A673 (cell line): ENCODE measurements at regions of chr4 and their contacts with region 1.

Region 1: GRCh38 chr4:116180157-116180601 is 905.2 kb downstream of the TRAM1L1 start:
- DNase-seq: peak; percentile 73
- H3K4me3 ChIP-seq: peak overlapping the region; percentile 31
- H3K27ac ChIP-seq: peak overlapping the region; percentile 97
- H3K4me1 ChIP-seq: peaks cover 58% of the 10 kb centered on the region
- H3K27me3 ChIP-seq: no peaks in the 10 kb centered on the region
- CTCF ChIP-seq: peak; percentile 78

Region 2: GRCh38 chr4:114780205-114780604 is 1400.0 kb before region 1 on chr4:
- CTCF ChIA-PET with region 1: no interaction called
- POLR2A ChIA-PET with region 1: no interaction called
- intact Hi-C with region 1: loop called (anchors 10 kb)
- DNase-seq: peak; percentile 85
- H3K4me3 ChIP-seq: no peak overlapping the region
- H3K27ac ChIP-seq: no peak overlapping the region
- H3K4me1 ChIP-seq: peaks cover 36% of the 10 kb centered on the region
- H3K27me3 ChIP-seq: no peaks in the 10 kb centered on the region
- CTCF ChIP-seq: peak; percentile 75

Region 3: DNA sequence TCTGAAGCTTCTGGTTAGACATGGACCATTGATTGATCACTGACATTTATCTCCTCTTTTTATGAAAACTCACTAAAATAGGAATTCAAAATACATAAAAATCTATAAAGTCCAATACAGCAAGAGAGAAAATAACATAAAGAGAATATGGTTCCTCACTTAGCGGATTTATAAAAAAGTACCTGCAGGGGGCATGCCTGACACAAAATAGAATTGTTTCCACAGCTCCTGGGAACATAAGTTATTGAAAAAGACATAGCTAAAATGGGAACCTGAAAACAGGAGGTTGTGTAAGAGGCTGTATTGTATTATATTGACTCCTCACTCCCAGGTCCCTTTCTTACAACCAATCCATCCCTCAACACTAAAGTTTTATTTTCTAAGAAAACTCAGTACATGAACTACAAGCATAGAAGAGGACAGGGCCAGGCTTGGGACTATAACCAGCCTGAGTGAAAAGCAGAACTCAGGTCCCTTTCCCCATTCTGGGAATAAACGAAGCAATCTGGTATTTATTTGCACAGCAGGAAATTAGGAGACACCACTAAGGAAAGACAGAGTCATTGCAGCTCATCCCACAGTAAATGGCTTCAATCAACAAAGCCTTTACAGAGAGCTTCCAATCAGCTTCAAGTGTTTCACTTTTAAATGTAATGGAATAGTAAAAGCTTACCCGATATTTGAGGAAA is 945.6 kb before region 1 on chr4:
- CTCF ChIA-PET with region 1: no interaction called
- POLR2A ChIA-PET with region 1: no interaction called
- intact Hi-C with region 1: loop called (anchors 10 kb)
- DNase-seq: peak; percentile 86
- H3K4me3 ChIP-seq: no peak overlapping the region
- H3K27ac ChIP-seq: peak overlapping the region; percentile 41
- H3K4me1 ChIP-seq: peaks cover 33% of the 10 kb centered on the region
- H3K27me3 ChIP-seq: no peaks in the 10 kb centered on the region
- CTCF ChIP-seq: peak; percentile 68

Region 4: GRCh38 chr4:115360441-115360840 is 819.7 kb before region 1 on chr4:
- CTCF ChIA-PET with region 1: no interaction called
- POLR2A ChIA-PET with region 1: no interaction called
- intact Hi-C with region 1: no loop called
- DNase-seq: peak; percentile 50
- H3K4me3 ChIP-seq: no peak overlapping the region
- H3K27ac ChIP-seq: no peak overlapping the region
- H3K4me1 ChIP-seq: peaks cover 14% of the 10 kb centered on the region
- H3K27me3 ChIP-seq: no peaks in the 10 kb centered on the region
- CTCF ChIP-seq: no peak

Region 5: GRCh38 chr4:116027311-116027710 is 152.9 kb before region 1 on chr4:
- CTCF ChIA-PET with region 1: no interaction called
- POLR2A ChIA-PET with region 1: no interaction called
- intact Hi-C with region 1: no loop called
- DNase-seq: peak; percentile 60
- H3K4me3 ChIP-seq: no peak overlapping the region
- H3K27ac ChIP-seq: no peak overlapping the region
- H3K4me1 ChIP-seq: no peaks in the 10 kb centered on the region
- H3K27me3 ChIP-seq: no peaks in the 10 kb centered on the region
- CTCF ChIP-seq: no peak

Region 6: DNA sequence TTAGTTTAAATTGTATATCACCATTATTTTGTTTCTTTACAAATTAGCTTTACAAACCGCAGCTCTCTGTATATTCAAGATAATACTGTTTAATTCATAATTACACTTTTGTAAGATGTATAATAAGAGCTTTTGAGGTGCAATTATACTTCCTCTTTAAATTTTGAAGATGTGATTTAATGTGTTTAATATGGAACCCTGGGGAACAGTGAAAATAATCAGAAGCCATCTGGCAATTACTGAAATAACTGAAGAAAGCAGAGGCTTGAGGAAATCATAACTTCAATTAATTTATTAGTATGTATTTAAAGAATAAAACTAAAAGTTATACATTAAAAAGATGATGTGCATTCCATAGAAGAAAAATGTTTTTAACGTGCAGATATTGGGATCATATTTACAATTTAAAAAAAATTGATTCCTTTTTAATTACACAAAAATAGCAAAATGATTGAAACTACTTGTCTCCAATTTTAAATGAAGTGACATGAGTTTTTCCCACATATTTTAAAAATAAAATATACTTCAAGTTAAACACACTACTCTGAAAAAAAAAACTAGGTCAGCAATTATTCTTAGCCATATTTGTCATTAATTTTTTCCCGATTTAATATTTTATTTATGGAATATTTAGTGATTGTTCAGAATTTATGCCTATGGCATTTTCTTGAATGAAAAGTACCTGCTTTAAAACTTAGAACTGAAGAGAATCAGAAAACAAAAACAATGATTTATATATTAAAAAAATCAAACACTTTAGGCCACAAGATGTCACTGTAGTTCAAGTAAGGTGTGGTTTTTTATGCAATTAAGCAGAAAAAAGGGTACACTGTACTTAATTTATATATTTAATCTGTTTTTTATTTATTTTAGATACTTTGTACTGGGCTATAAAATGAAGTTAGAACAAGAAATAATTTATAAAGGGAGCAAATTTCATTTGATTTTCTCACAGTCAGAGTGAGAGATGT is 124.0 kb before region 1 on chr4:
- CTCF ChIA-PET with region 1: no interaction called
- POLR2A ChIA-PET with region 1: no interaction called
- intact Hi-C with region 1: loop called (anchors 5 kb)
- DNase-seq: peak; percentile 74
- H3K4me3 ChIP-seq: no peak overlapping the region
- H3K27ac ChIP-seq: peak overlapping the region; percentile 68
- H3K4me1 ChIP-seq: peaks cover 15% of the 10 kb centered on the region
- H3K27me3 ChIP-seq: no peaks in the 10 kb centered on the region
- CTCF ChIP-seq: peak; percentile 64

Region 7: GRCh38 chr4:116150152-116150551 is 30.0 kb before region 1 on chr4:
- CTCF ChIA-PET with region 1: no interaction called
- POLR2A ChIA-PET with region 1: no interaction called
- intact Hi-C with region 1: no loop called
- DNase-seq: peak; percentile 39
- H3K4me3 ChIP-seq: no peak overlapping the region
- H3K27ac ChIP-seq: no peak overlapping the region
- H3K4me1 ChIP-seq: no peaks in the 10 kb centered on the region
- H3K27me3 ChIP-seq: no peaks in the 10 kb centered on the region
- CTCF ChIP-seq: 0 out of 2 replicates have a peak, but pooled peaks have one; percentile 29

Region 8: DNA sequence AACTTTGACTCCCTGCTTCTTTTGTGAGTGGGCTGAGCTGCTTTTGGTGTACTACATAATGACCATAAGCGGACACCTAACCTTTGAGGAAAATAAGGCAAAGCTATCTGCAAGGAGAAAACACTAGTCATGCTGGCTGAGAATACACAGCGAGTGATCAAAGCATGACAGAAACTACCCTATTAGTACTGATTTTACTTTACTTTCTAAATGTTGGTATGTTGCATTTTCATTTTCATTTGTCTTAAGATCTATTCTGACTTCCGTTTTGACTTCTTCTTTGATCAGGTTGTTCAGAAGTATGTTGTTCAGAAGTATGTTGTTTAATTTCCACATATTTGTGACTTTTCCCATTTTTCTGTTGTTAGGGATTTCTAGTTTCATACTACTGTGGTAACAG is 544.1 kb after region 1 on chr4:
- CTCF ChIA-PET with region 1: no interaction called
- POLR2A ChIA-PET with region 1: no interaction called
- intact Hi-C with region 1: loop called (anchors 10 kb)
- DNase-seq: no peak
- H3K4me3 ChIP-seq: no peak overlapping the region
- H3K27ac ChIP-seq: no peak overlapping the region
- H3K4me1 ChIP-seq: no peaks in the 10 kb centered on the region
- H3K27me3 ChIP-seq: no peaks in the 10 kb centered on the region
- CTCF ChIP-seq: no peak

Region 9: DNA sequence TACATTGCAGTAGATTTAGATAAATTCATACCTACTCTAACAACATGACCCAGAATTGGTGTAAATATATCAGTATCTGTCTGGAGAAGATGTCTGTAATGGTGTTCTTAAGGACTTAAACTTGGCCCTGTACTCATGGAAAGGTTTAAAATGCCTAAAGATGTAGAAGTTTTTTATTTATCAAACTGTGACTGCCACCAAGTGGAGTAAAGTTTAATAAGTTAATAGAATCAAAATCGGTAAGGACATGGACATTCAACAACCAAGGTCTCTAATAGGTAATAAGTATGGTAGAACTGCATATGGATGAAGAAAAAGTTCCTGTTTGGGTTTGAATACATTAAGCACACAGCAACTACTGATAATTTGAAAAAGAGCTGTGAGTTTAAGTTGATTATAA is 1380.2 kb after region 1 on chr4:
- CTCF ChIA-PET with region 1: no interaction called
- POLR2A ChIA-PET with region 1: no interaction called
- intact Hi-C with region 1: loop called (anchors 5 kb)
- DNase-seq: peak; percentile 63
- H3K4me3 ChIP-seq: no peak overlapping the region
- H3K27ac ChIP-seq: no peak overlapping the region
- H3K4me1 ChIP-seq: no peaks in the 10 kb centered on the region
- H3K27me3 ChIP-seq: no peaks in the 10 kb centered on the region
- CTCF ChIP-seq: peak; percentile 40